ENCODE measurements at regions of chr1 and their contacts with region 1.

Region 1: GRCh38 chr1:225777583-225778336 is at the start of gene SRP9:
- DNase-seq: peak; percentile 95
- H3K4me3 ChIP-seq: peak within 1 kb of the TSS; percentile 81 to 88
- H3K27ac ChIP-seq: peak within 1 kb of the TSS; percentile 95 to 96
- H3K4me1 ChIP-seq: peaks cover 14 to 21% of the 10 kb centered on the region in 2 experiments
- H3K27me3 ChIP-seq: no peaks in the 10 kb centered on the region
- CTCF ChIP-seq: peak; percentile 90
- EP300 ChIP-seq: no peak
- RAD21 ChIP-seq: peak; percentile 66
- polyA plus RNA-seq, gene SRP9: 156 and 292 TPM in 2 replicates

Region 2: DNA sequence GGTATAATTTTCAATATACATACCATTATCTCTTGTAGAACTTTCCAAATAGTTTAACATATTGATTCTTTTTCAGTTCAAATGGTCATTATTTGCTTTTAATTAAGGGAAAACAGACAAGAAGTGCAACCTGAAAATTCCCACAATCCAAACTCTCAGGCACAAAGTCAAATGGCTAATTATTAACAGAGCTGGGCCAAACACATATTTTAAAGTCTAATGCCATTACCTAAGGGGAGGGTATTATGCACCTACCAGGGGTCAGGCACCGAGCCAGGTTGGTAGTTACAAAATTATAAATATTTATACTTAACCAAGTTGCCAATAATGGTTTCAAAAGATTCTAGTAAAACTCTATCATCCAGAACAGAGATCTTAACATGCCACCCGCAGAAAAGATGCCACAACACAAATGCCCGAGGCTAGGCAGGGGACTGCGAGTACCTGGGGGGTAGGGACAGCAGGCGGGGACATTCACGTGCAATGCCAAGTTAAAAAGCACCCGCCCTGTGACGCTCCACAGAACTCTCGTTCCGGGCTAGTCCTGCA is 364.9 kb before region 1 on chr1:
- CTCF ChIA-PET with region 1: no interaction called
- POLR2A ChIA-PET with region 1: no interaction called
- DNase-seq: no peak
- H3K4me3 ChIP-seq: no peak overlapping the region
- H3K27ac ChIP-seq: no peak overlapping the region
- H3K4me1 ChIP-seq: peaks cover 0 to 2% of the 10 kb centered on the region in 2 experiments; a peak in 2 of 4 replicates
- H3K27me3 ChIP-seq: no peaks in the 10 kb centered on the region
- CTCF ChIP-seq: no peak
- EP300 ChIP-seq: no peak
- RAD21 ChIP-seq: no peak

Region 3: DNA sequence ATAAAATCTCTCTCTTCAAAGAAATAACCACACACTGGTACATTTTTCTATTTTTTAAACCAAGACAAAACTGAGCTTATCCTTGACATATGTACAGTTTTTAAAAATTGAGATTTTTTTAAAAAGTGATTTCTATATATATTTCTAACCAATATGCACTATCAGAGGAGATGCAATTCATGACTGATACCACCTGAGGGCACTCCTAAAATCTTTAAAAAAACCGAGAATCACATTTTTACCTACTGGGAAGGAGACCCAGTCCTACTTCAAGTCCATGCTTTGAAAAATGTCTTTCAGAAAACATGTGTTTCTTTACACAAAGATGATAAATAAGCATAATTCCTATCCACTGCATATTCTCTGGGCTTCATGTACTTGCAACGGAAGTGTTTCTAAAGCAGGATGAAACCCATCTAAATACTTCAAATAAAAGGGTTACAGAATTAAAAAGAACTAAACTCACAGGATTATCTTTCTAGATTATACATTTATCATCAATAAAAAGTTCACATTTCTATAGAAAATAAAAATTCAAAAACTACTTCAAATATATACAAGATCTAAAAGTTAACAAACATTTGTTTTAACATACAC is 223.4 kb before region 1 on chr1:
- CTCF ChIA-PET with region 1: interaction called, 95 read pairs
- POLR2A ChIA-PET with region 1: no interaction called
- DNase-seq: peak; percentile 53
- H3K4me3 ChIP-seq: no peak overlapping the region; a peak in 1 of 4 replicates
- H3K27ac ChIP-seq: no peak overlapping the region
- H3K4me1 ChIP-seq: no peaks in the 10 kb centered on the region; a peak in 1 of 4 replicates
- H3K27me3 ChIP-seq: no peaks in the 10 kb centered on the region
- CTCF ChIP-seq: peak; percentile 70
- EP300 ChIP-seq: no peak
- RAD21 ChIP-seq: peak; percentile 71

Region 4: DNA sequence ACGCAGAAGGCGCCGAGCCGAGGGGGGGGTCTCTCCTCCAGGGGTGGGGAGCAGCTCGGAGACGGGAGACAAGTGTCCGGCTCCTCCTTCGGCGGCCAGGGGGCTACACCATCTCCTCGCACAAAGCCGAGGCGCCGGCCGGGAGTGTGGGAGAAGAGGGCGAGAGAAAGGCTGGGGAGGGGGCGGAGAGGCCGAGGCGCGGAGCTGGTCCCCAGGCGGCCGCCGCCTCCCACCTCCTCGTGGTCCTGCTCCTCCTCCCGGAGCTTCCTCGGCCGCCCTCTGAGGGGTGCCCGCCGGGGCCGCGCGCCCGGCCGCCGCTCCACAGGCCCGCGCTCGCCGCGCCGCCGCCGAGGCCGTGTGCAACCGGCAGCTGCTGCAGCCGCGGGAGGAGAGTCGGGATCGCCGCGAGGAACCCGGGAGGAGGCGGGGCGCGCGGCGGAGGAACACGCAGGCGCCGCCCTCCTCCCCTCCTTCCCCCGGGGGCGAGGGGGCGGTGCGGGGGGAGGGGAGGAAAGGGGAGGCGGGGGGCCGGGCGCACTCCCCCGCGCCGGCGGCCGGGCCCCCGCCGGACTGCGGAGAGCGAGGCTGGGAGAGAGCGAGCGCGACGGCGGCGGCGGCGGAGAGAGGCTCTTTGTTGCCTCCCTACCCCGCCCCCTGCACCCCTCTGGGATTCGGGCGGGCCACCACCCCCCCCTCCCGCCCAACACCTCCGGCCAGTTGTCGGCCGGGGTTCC is 124.9 kb before region 1 on chr1 and contains the start of gene ENAH:
- CTCF ChIA-PET with region 1: interaction called, 29 read pairs
- POLR2A ChIA-PET with region 1: interaction called, 14 read pairs
- DNase-seq: peak; percentile 96
- H3K4me3 ChIP-seq: peak within 1 kb of the TSS; percentile 96 to 98
- H3K27ac ChIP-seq: peak within 1 kb of the TSS; percentile 95 to 99
- H3K4me1 ChIP-seq: peaks cover 18 to 41% of the 10 kb centered on the region in 2 experiments
- H3K27me3 ChIP-seq: no peaks in the 10 kb centered on the region
- CTCF ChIP-seq: no peak
- EP300 ChIP-seq: no peak
- RAD21 ChIP-seq: no peak
- polyA plus RNA-seq, gene ENAH: 48.9 and 72.0 TPM in 2 replicates

Region 5: GRCh38 chr1:225766967-225767633 is 10.7 kb before region 1 on chr1:
- CTCF ChIA-PET with region 1: interaction called, 33 read pairs
- POLR2A ChIA-PET with region 1: interaction called, 11 read pairs
- DNase-seq: peak; percentile 72
- H3K4me3 ChIP-seq: no peak overlapping the region
- H3K27ac ChIP-seq: peak overlapping the region; percentile 81 to 90
- H3K4me1 ChIP-seq: peaks cover 43 to 64% of the 10 kb centered on the region in 2 experiments
- H3K27me3 ChIP-seq: no peaks in the 10 kb centered on the region
- CTCF ChIP-seq: no peak
- EP300 ChIP-seq: peak; percentile 71 to 93
- RAD21 ChIP-seq: no peak

Region 6: DNA sequence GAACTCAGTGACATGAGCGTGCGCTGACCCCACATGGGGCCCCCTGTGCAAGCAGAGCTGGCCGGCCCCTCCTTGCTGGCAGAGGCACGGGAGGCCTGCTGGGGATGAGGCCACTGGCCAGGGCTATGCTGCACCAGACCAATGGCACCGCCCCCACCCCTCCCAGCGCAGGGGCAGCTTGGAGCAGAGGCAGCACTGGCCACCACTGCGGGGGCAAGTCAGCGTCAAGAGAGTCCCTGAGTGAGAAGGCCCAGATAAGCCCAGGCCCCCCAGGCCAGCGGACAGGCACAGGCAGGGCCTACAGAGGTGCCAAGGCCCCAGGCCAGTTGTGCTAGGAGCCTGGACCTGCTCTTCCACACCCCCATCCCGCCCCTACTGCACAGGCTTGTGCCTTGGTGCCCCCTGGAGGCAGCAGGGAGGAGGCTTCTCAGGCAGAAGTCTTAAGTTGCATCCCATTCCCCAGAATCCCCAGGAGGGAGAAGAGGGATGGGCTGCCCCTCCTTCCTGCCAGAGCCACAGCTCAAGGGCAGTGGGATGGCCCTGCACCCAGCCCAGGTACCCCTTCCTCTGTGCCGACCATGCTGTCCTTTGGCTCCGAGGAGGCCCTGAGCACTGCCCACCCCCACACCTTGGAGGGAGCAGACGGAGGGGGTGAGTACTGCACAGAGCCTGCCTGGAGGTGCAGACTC is 68.0 kb after region 1 on chr1:
- CTCF ChIA-PET with region 1: interaction called, 11 read pairs
- POLR2A ChIA-PET with region 1: interaction called, 6 read pairs
- DNase-seq: peak; percentile 85
- H3K4me3 ChIP-seq: no peak overlapping the region; a peak in 1 of 4 replicates
- H3K27ac ChIP-seq: no peak overlapping the region
- H3K4me1 ChIP-seq: peaks cover 0 to 11% of the 10 kb centered on the region in 2 experiments; a peak in 1 of 4 replicates
- H3K27me3 ChIP-seq: no peaks in the 10 kb centered on the region
- CTCF ChIP-seq: peak; percentile 70
- EP300 ChIP-seq: no peak
- RAD21 ChIP-seq: peak; percentile 77

Region 7: GRCh38 chr1:225923692-225924555 is 146.2 kb after region 1 on chr1 and contains the start of gene PYCR2:
- CTCF ChIA-PET with region 1: interaction called, 4 read pairs
- POLR2A ChIA-PET with region 1: interaction called, 12 read pairs
- DNase-seq: peak; percentile 99
- H3K4me3 ChIP-seq: peak within 1 kb of the TSS; percentile 92 to 98
- H3K27ac ChIP-seq: peak within 1 kb of the TSS; percentile 93 to 95
- H3K4me1 ChIP-seq: peaks cover 28 to 47% of the 10 kb centered on the region in 2 experiments
- H3K27me3 ChIP-seq: no peaks in the 10 kb centered on the region
- CTCF ChIP-seq: no peak
- EP300 ChIP-seq: no peak
- RAD21 ChIP-seq: 0 out of 2 replicates have a peak, but pooled peaks have one; percentile 13
- polyA plus RNA-seq, gene PYCR2: 95.3 and 124 TPM in 2 replicates

Region 8: GRCh38 chr1:225977937-225978748 is 200.4 kb after region 1 on chr1:
- CTCF ChIA-PET with region 1: interaction called, 26 read pairs
- POLR2A ChIA-PET with region 1: no interaction called
- DNase-seq: no peak
- H3K4me3 ChIP-seq: no peak overlapping the region
- H3K27ac ChIP-seq: no peak overlapping the region
- H3K4me1 ChIP-seq: no peaks in the 10 kb centered on the region; a peak in 1 of 4 replicates
- H3K27me3 ChIP-seq: no peaks in the 10 kb centered on the region
- CTCF ChIP-seq: no peak
- EP300 ChIP-seq: no peak
- RAD21 ChIP-seq: no peak

Measured in SK-N-SH (cell line).